IMR-90 (cell line): ENCODE measurements at regions of chr6 and their contacts with region 1.

Region 1: DNA sequence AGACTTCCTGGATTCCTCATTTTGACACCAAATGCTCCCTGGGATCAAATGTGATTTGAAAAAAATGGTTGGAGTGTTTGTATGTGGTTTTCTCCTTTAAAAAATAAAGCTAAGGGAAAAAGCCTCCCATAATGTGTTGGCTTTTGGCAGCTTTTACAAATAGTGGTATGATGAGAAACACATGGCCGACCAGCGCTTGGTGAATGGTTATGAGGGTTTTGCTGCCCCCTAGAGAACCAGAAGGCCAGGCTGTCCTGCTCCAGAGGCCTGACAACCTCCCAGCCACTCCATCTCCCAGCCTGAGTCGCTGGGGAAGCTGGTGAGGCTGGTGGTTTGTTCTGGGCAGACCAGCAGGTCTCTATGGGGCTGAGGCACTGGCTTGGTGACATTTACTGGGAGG is 69.3 kb downstream of the CLIC5 start:
- DNase-seq: peak; percentile 72
- ATAC-seq: peak; percentile 96
- H3K4me3 ChIP-seq: no peak overlapping the region
- H3K27ac ChIP-seq: no peak overlapping the region
- H3K4me1 ChIP-seq: no peaks in the 10 kb centered on the region
- H3K27me3 ChIP-seq: peaks cover 12% of the 10 kb centered on the region; the same call in 1 of the 2 replicates
- CTCF ChIP-seq: peak; percentile 54
- POLR2A ChIP-seq: no peak
- RAD21 ChIP-seq: peak; percentile 53

Region 2: GRCh38 chr6:44593539-44593944 is 1352.8 kb before region 1 on chr6:
- CTCF ChIA-PET with region 1: no interaction called
- POLR2A ChIA-PET with region 1: no interaction called
- dilution Hi-C with region 1: no loop called
- in situ Hi-C with region 1: no loop called
- intact Hi-C with region 1: loop called (anchors 1 kb)
- DNase-seq: peak; percentile 58
- ATAC-seq: peak; percentile 81
- H3K4me3 ChIP-seq: no peak overlapping the region
- H3K27ac ChIP-seq: no peak overlapping the region
- H3K4me1 ChIP-seq: no peaks in the 10 kb centered on the region
- H3K27me3 ChIP-seq: peaks cover 28% of the 10 kb centered on the region
- CTCF ChIP-seq: peak; percentile 54
- POLR2A ChIP-seq: no peak
- RAD21 ChIP-seq: peak; percentile 59